Pancreas (tissue), 10 donors: ENCODE measurements at regions of chr11 and their contacts with region 1.

Region 1: DNA sequence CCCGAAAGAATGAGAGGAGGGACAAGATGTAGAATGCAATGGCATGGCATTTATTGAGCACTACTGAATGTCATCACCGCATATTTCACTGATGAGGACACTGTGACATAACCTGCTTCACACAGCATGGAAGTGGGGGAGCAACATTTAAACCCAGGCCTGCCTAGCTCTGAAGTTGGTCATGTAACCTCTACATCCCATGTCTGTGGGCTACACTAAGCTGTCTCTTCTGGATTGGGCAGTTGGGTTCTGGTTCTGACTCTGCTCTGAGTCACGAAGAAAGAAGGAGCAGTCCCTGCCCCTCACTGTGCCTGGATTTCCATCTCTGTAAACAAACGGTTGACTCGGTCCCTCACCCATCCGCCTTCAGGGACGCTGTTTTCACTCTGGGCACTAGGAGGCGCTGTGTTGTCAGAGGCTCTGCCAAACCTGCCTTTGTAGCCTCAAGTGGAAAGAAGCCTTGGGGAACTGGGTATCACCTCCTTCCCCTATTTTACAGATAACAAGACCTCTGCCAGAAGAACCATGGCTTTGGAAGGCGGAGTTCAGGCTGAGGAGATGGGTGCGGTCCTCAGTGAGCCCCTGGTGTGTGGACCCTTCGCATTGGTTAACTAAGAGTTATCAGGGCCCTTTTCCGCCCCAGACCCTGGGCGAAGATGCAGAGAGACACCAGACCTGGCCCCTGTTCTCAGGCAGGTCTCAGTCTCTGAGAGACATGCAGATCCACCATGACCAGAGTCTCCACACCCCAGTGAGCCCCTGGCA is 12.7 kb upstream of the ARHGEF17 start:
- DNase-seq: peak in 4 of 6 donors; percentile 30 to 87 (median 67)
- ATAC-seq: peak; percentile 56 to 87 (median 70)
- H3K4me3 ChIP-seq: no peak overlapping the region
- H3K27ac ChIP-seq: no peak overlapping the region
- H3K4me1 ChIP-seq: no peaks in the 10 kb centered on the region
- H3K27me3 ChIP-seq: no peaks in the 10 kb centered on the region
- CTCF ChIP-seq: peak; percentile 72 to 86 (median 80)

Region 2: GRCh38 chr11:73047773-73048371 is 247.5 kb before region 1 on chr11:
- intact Hi-C with region 1: no loop called
- DNase-seq: no peak
- ATAC-seq: peak; percentile 75 to 83 (median 78)
- H3K4me3 ChIP-seq: no peak overlapping the region
- H3K27ac ChIP-seq: no peak overlapping the region
- H3K4me1 ChIP-seq: peaks cover 11 to 24% (median 22%) of the 10 kb centered on the region in 3 donors
- H3K27me3 ChIP-seq: no peaks in the 10 kb centered on the region
- CTCF ChIP-seq: no peak

Region 3: GRCh38 chr11:73335204-73335923 is 40.0 kb after region 1 on chr11:
- intact Hi-C with region 1: loop called in 1 of 3 experiments (anchors 5 kb)
- DNase-seq: peak; percentile 65 to 97 (median 86)
- ATAC-seq: peak; percentile 84 to 94 (median 90)
- H3K4me3 ChIP-seq: no peak overlapping the region
- H3K27ac ChIP-seq: peak overlapping the region in 2 of 4 donors; percentile 6 to 20
- H3K4me1 ChIP-seq: peaks cover 0 to 6% (median 0%) of the 10 kb centered on the region in 3 donors
- H3K27me3 ChIP-seq: no peaks in the 10 kb centered on the region
- CTCF ChIP-seq: peak; percentile 91 to 98 (median 95)